ENCODE measurements at regions of chr2 and their contacts with region 1.

Region 1: DNA sequence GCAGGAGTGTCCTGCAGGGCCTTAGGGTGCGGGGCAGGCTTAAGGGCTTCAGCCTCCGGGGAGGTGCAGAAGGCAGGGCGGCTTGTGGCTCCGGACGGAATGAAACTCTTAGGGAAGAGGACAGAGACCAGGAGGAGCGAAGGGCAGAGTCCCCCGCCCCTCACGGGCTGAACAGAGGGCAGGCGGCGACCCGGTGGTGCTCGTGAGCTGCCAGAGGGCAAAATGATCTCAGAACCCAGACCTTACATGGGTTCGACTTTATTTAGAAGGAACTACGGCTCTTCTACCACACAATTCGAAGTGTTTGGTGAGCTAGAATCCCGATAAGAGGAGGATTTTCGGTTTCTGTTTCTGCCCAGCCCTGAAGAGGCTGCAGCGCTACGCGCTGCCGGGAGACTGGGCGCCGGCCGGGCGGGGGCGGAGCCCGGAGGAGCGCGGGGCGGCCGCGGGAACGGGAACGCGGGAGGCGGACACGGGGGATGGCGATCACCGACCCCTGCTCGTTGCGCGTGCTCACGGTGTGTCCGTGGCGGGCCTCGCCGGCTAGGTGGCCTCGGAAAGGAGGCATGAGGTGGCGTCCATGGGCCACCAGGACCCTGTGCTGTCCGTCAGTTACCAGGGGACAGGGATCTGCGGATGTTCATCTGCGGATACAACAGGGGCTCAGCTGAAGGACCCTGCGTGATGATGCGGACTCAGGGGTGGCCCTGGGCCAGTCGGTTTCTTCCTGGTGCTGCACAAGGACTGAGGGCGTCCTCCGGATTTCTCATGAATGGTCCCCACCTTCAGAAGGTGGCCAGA is 4.2 kb upstream of the SP100 start:
- DNase-seq: peak in 1 of 2 donors; percentile 43
- ATAC-seq: peak; percentile 63 to 69
- H3K4me3 ChIP-seq: peak overlapping the region; percentile 70 to 78 (median 76)
- H3K27ac ChIP-seq: peak overlapping the region; percentile 72 to 86 (median 83)
- H3K4me1 ChIP-seq: peaks cover 13 to 18% of the 10 kb centered on the region in 2 donors
- H3K27me3 ChIP-seq: no peaks in the 10 kb centered on the region
- CTCF ChIP-seq: no peak
- POLR2A ChIP-seq: peak; percentile 26 to 43

Region 2: GRCh38 chr2:230219419-230220331 is 192.1 kb before region 1 on chr2 and contains the start of gene SP110:
- in situ Hi-C with region 1: no loop called
- intact Hi-C with region 1: loop called (anchors 10 kb)
- DNase-seq: peak; percentile 54 to 71
- ATAC-seq: peak; percentile 87 to 97
- H3K4me3 ChIP-seq: peak within 1 kb of the TSS; percentile 60 to 88 (median 70)
- H3K27ac ChIP-seq: peak within 1 kb of the TSS; percentile 63 to 78 (median 76)
- H3K4me1 ChIP-seq: peaks cover 5 to 6% of the 10 kb centered on the region in 2 donors
- H3K27me3 ChIP-seq: no peaks in the 10 kb centered on the region
- CTCF ChIP-seq: no peak
- POLR2A ChIP-seq: peak in 1 of 2 donors; percentile 10
- total RNA-seq, gene SP110: 3.0 to 7.0 (median 6.5) TPM

Region 3: DNA sequence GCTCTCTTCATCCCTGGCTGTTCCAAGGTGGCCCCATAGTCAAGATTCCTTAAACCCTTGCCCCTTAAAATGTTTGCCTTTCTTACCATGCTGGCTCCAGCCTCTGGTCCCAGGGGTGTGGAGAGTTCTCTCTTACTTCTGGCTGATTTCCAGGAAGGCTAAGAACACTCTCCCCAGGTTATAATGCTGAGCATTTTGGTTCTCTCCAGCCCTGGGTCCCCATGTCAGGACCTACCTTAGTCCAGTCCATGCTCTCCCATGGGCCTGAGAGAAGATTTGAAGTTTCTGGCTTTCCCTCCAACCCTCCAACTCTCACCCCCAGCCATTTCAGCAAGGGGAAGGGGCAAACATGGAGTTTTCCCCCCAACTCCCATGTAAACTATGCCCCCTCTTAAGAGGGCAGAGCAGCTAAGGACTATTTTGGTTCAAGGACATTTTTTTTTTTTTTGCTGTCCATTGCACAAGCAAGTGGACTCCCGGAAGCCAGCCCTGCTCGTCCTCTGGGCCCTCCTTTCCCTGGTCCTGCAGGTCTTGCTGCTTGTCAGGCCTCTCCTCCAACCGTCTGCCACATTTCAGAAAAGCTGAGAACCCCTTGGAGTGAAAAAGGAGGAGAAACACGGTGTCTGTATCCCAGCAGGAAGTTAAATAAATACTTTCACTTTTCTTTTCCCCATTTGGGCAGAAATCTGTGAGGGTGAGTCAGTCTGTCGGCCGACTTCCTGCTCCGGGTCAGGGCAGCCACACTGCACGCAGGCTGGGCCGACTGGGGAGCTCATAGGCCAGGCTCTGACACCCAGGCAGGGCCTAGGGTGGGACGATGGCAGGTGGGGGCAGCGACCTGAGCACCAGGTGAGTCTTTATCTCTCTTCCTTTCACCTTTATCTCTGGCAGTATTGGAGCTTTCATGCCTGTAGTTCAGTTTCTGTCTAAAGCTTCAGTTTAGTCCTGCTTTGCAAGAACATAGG is 85.0 kb before region 1 on chr2 and contains the start of gene SP140L:
- in situ Hi-C with region 1: no loop called
- intact Hi-C with region 1: loop called (anchors 5 kb)
- DNase-seq: peak; percentile 29 to 64
- ATAC-seq: peak; percentile 45 to 72
- H3K4me3 ChIP-seq: peak within 1 kb of the TSS; percentile 44 to 70 (median 53)
- H3K27ac ChIP-seq: peak within 1 kb of the TSS; percentile 54 to 77 (median 70)
- H3K4me1 ChIP-seq: peaks cover 5 to 26% of the 10 kb centered on the region in 2 donors
- H3K27me3 ChIP-seq: no peaks in the 10 kb centered on the region
- CTCF ChIP-seq: no peak
- POLR2A ChIP-seq: no peak
- total RNA-seq, gene SP140L: 2.2 to 13.5 (median 3.8) TPM

Region 4: DNA sequence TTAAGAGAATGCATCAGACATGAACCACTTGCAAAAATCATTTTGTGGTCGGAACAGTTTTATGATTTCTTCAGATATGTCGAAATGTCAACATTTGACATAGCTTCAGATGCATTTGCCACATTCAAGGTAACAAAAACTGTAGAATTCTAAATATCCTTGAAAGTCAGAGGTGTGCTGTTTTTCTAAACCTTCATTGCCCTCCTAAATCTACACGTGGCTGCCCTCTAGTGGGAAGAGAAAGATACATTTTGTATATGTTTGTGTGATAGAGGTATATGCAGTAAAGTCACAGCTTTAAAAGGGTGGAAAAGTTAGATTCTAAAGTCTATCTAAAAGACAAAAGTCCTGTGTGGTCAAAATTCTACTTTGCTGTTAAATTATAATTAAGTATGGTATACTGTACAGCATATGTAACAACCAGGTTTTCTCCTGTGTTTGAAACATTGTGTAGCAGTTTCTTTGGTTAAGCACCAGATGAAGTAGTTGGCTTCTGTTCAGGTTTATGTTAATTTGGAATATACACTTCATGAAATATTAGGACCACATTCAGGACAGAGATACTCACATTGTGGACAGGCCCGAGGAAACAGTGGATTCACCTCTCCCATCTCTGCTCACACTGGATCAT is 387.1 kb after region 1 on chr2:
- in situ Hi-C with region 1: no loop called
- intact Hi-C with region 1: loop called (anchors 10 kb)
- DNase-seq: no peak
- ATAC-seq: peak in 1 of 2 donors; percentile 27
- H3K4me3 ChIP-seq: no peak overlapping the region
- H3K27ac ChIP-seq: peak overlapping the region in 3 of 4 donors; percentile 67 to 79 (median 68)
- H3K4me1 ChIP-seq: peaks cover 41 to 52% of the 10 kb centered on the region in 2 donors
- H3K27me3 ChIP-seq: no peaks in the 10 kb centered on the region
- CTCF ChIP-seq: peak; percentile 38 to 76 (median 65)
- POLR2A ChIP-seq: no peak

Measured in gastrocnemius medialis (tissue), 4 donors.